Activated T-helper 1 cell treated with anti-CD3 and anti-CD28 coated beads, Interleukin-12 subunit alpha, Interleukin-12 subunit beta, Interleukin-2, Interleukin-4 antibody, amounts not matched to agents 30 ng/mL and 10 ng/mL and 1 ng/mL, durations not matched to agents 14 hours and 24 hours and 36 hours (primary cell): ENCODE measurements at regions of chr7 and their contacts with region 1.

Region 1: DNA sequence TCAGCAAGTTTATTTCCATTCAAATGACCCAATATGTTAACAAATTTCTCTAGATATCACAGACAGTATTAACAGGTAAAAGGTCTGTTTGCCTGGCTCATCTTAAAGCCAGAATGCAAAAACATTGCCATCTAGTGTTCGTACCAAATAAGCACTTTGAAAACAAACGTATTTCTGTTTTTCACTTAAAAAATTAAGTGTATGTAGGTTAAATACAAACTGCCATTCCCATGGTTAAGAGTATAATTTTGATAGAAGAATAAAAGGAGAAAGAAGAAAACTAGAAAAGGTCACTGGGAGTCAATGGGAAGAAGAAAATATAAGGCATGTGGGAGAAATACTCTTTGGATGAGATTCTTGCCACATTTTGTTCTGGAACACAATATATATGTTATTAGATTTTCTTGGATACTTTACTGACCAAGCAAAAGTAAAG is 51.0 kb downstream of the ORC5 start:
- DNase-seq: no peak
- H3K4me3 Mint-ChIP-seq: no peak overlapping the region
- H3K27ac Mint-ChIP-seq: no peak overlapping the region
- H3K4me1 Mint-ChIP-seq: no peaks in the 10 kb centered on the region
- H3K27me3 Mint-ChIP-seq: no peaks in the 10 kb centered on the region

Region 2: DNA sequence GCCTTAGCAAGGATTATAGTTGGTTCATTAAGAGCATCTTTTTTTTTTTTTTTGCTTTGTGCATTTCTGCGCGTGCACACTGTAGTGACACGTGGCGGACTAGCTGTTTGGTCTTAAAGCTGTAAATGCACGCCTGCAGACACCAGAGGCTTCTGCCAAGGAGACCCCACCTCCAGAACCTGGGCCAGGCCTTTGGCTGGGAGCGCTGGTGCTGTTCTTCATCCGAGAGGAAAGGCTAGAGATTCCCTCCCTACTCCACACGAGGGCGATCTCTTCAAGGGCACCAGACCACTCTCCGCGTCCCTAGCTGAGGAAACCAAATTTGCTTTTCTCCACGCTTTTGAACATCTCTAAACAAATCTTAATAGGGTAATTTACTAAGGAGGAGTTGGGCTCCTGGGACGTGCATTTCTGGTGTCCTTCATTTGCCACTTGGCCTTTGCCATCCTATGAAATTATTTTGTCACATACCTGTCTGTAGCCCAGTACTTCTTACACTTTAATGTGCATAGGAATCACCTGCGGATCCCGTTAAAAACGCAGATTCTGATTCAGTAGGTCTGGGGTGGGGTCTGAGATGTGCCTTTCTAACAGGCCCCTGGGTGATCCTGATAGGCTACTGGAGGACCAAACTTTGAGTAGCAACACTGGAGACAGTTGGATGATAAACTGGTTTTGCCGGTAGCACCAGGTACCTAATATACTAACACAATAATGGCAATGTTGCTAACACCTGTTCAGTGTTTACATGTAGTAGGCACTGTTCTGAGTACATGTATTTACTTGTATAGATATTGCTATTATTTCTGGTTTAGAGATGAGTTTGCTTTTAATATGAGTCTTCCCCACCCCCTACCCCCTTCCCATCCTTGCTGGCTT is 709.5 kb before region 1 on chr7:
- intact Hi-C with region 1: loop called (anchors 2 kb)
- DNase-seq: peak; percentile 5
- H3K4me3 Mint-ChIP-seq: no peak overlapping the region
- H3K27ac Mint-ChIP-seq: no peak overlapping the region
- H3K4me1 Mint-ChIP-seq: no peaks in the 10 kb centered on the region
- H3K27me3 Mint-ChIP-seq: peaks cover 48% of the 10 kb centered on the region

Region 3: GRCh38 chr7:103573479-103574058 is 583.3 kb before region 1 on chr7:
- intact Hi-C with region 1: loop called (anchors 1 kb)
- DNase-seq: no peak
- H3K4me3 Mint-ChIP-seq: no peak overlapping the region
- H3K27ac Mint-ChIP-seq: no peak overlapping the region
- H3K4me1 Mint-ChIP-seq: no peaks in the 10 kb centered on the region
- H3K27me3 Mint-ChIP-seq: peaks cover 2% of the 10 kb centered on the region

Region 4: GRCh38 chr7:103887855-103888602 is 268.8 kb before region 1 on chr7:
- intact Hi-C with region 1: no loop called
- DNase-seq: no peak
- H3K4me3 Mint-ChIP-seq: no peak overlapping the region
- H3K27ac Mint-ChIP-seq: no peak overlapping the region
- H3K4me1 Mint-ChIP-seq: no peaks in the 10 kb centered on the region
- H3K27me3 Mint-ChIP-seq: no peaks in the 10 kb centered on the region

Region 5: DNA sequence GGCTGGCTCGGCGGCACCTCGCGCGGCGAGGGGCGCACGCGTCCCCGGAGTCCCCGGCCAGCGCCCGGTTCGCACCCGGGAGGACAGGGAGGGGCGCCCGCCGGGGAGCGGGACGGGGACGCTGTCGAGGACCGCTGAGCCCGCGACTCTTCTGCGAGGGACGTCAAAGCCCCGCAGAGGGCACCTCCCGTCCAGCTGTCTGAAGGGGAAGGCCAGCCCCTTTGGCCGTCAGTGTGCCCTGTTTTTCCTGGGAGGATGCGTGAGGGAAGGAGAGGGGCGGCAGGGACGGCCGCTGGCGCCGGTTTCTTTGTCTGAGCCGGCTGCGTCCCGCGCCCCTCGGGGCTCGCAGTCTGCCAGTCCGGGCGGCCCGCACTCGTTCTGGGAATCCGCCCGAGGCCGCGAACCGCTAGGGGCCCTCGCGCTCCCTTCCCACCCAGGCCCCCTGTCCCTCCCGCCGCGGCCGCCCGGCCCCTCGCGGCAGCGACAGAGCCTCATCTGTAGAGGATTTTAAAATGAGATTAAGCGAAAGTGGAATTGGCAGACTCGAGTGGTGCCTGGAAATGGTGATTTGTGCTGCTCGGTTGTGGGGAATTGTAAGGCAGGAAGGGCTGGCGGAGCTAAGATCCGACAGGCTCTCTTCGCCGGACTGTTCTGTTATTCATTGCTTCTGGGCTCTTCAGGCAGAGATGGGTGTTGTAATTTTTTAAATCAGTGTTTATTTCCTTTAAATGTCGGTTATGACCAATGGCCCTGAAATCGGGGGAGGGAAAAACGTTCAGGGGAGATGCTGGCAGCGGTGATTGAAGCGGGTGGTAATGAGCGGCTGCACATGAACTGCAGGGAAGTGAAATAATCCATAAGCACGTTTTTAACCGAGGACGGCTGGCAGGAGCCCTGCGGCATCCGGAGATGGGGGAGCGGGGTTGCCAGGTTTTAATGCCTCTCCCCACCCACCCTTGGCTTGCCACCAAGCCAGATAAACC is 166.8 kb before region 1 on chr7:
- intact Hi-C with region 1: loop called (anchors 5 kb)
- DNase-seq: no peak
- H3K4me3 Mint-ChIP-seq: peak overlapping the region; percentile 23
- H3K27ac Mint-ChIP-seq: no peak overlapping the region
- H3K4me1 Mint-ChIP-seq: peaks cover 6% of the 10 kb centered on the region
- H3K27me3 Mint-ChIP-seq: peaks cover 47% of the 10 kb centered on the region

Region 6: DNA sequence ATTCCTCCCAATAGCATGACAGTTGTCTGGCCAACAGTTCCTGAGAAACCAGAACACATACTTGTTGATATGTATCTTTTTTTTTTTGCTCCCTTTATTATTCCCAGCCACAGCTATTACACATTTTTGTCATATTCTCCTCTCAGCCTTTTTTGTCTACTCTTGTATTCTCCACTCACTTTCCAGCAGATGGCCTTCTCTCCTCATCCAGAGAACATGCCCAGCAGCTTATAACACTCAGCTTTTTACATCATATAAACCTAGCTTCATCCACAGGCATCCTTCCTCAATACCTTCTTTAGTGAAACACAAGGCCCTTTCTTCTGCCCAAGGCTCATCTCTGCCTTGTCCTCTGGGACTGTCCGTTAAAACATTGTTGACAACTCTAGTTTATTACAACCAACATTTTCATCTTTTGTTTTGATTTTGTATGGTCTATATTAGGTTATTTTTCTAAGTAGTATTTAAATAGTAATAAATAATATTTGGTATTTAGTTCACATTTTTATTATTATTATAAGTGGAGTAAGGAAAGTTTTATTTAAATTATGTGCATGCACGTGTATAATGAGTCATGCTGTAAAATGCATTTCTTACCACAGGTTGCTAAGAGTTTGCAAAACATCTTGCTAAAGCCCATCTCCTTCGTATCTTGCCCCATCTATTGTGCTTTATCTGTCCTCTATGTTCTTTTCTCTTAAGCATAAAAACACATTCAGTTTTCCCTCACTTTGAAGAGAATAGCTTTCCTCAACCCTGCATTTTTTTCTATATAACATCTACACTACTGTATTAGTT is 50.6 kb before region 1 on chr7:
- intact Hi-C with region 1: loop called (anchors 1 kb)
- DNase-seq: no peak
- H3K4me3 Mint-ChIP-seq: no peak overlapping the region
- H3K27ac Mint-ChIP-seq: no peak overlapping the region
- H3K4me1 Mint-ChIP-seq: no peaks in the 10 kb centered on the region
- H3K27me3 Mint-ChIP-seq: peaks cover 4% of the 10 kb centered on the region

Region 7: DNA sequence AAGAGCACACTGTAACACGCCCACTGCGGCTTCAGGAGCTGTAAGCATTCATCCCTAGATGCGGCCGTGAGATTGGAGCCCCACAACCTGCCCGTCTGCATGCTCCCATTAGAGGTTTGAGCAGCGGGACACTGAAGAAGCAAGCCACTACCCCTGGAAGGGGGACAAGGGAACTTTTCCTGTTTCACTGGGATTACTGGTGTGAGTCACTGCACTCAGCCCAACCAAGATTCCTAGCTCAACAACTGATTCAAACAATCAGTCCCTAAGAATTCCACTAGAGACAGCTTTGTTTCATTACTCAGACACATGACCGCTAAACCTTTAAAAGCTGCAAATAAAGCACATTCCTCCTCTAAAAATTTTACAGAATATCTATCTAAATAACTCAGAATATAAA is 18.9 kb before region 1 on chr7:
- intact Hi-C with region 1: loop called (anchors 2 kb)
- DNase-seq: no peak
- H3K4me3 Mint-ChIP-seq: no peak overlapping the region
- H3K27ac Mint-ChIP-seq: no peak overlapping the region
- H3K4me1 Mint-ChIP-seq: peaks cover 9% of the 10 kb centered on the region
- H3K27me3 Mint-ChIP-seq: no peaks in the 10 kb centered on the region